Posterior vena cava (tissue), 2 donors: ENCODE measurements at regions of chr11 and their contacts with region 1.

Region 1: GRCh38 chr11:120229451-120230424 is 10.2 kb upstream of the POU2F3 start:
- DNase-seq: no peak

Region 2: DNA sequence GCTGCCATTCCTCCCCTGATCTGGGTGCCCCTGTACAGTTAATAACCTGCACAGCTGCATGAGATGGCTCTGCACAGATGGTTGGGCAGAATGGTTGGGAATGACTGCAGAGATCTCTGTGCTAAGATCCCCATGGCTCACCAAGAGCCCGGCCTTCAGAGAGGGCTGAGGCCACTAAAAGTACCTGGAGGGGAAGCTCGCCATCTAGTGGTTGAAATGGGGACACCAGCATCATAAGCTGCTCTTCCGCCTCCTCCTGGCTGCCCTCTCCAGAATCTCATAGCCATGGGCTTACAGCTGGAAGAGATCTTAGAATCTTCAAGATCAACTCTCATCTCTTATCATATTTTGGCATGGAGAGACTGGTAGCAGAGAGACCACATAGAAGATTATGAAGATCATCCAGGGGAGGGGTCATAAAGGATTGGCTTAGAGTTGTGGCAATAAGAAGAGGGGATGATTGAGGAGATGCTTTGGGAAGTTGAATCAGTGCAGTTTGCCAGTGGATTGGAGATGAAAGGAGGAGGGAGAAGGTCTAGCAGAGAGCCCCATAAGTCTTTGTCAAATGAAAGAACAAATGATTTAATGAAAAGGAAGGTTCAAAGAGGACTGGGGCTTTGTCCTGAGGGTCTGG is 73.4 kb after region 1 on chr11:
- intact Hi-C with region 1: loop called in 1 of 2 experiments (anchors 5 kb)
- DNase-seq: peak; percentile 85

Region 3: DNA sequence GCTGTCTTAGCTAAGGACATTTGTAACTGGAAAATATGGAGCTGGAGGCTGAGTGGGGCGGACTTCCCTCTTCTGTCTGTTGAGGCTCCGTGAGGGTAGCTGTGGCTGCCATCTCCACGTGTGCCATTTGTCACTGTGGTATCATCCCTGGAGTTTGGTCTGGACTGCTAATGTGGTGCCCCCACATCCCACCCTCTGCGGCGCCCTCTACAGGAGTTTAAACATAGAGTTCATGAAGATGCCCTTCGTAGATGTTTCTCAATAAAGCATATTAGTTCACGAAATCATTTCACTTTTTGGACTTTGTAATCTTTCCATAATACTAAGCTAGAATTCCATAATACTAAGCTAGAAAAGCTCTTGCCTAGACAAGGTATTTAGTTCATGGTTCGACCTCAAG is 923.7 kb after region 1 on chr11:
- intact Hi-C with region 1: no loop called
- DNase-seq: no peak